Uterus (tissue), 4 donors: ENCODE measurements at regions of chr2 and their contacts with region 1.

Region 1: DNA sequence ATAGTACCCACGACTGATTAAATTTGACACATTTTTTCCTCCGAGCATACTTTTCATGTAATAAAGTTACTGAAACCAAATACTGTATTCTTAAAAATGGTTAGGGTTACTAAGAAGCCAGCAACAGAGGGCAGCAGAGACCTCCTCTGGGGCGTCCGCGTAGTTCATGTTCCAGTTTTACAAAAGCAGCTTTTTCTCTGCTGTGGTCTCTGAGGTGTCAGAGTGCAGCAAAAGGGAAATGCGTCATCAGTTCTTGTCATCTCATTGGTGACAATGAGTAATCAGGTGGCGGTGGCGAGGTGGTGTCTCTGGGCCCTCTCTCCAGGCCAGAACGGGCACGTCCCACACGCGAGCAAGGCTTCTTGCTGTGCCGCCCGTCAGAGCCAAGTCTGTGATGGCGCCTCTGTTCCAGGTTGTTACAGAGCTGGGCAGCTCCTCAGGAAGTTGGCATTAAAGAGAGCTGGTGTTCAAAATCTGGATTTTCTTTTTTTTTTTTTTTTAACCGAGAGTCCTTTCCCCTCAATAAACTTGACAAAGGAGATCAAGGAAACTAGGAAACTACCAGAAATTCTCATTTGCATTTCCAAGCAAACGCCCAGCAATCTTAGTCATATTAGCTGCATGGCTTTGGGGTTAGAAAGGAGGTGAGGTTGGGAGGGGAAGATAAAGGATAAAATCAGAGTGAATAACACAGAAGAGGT is 98.6 kb upstream of the BZW1 start:
- DNase-seq: peak; percentile 70 to 75
- H3K4me3 ChIP-seq: peak overlapping the region; percentile 23 to 43
- H3K27ac ChIP-seq: peak overlapping the region; percentile 41 to 42
- H3K4me1 ChIP-seq: peaks cover 0 to 4% of the 10 kb centered on the region in 2 donors
- H3K27me3 ChIP-seq: no peaks in the 10 kb centered on the region
- CTCF ChIP-seq: peak; percentile 75 to 85 (median 81)
- POLR2A ChIP-seq: peak; percentile 20 to 69

Region 2: GRCh38 chr2:200811336-200812121 is 98.4 kb after region 1 on chr2 and contains the start of gene BZW1:
- intact Hi-C with region 1: loop called (anchors 5 kb)
- DNase-seq: peak; percentile 96 to 97
- H3K4me3 ChIP-seq: peak within 1 kb of the TSS; percentile 62 to 84
- H3K27ac ChIP-seq: peak within 1 kb of the TSS; percentile 97 to 99
- H3K4me1 ChIP-seq: peaks cover 0 to 12% of the 10 kb centered on the region in 2 donors
- H3K27me3 ChIP-seq: no peaks in the 10 kb centered on the region
- CTCF ChIP-seq: peak in 1 of 4 experiments; percentile 7
- POLR2A ChIP-seq: peak; percentile 79 to 85
- total RNA-seq, gene BZW1: 39.2 to 322 (median 129) TPM